B cell (primary cell): ENCODE measurements at regions of chr9 and their contacts with region 1.

Region 1: DNA sequence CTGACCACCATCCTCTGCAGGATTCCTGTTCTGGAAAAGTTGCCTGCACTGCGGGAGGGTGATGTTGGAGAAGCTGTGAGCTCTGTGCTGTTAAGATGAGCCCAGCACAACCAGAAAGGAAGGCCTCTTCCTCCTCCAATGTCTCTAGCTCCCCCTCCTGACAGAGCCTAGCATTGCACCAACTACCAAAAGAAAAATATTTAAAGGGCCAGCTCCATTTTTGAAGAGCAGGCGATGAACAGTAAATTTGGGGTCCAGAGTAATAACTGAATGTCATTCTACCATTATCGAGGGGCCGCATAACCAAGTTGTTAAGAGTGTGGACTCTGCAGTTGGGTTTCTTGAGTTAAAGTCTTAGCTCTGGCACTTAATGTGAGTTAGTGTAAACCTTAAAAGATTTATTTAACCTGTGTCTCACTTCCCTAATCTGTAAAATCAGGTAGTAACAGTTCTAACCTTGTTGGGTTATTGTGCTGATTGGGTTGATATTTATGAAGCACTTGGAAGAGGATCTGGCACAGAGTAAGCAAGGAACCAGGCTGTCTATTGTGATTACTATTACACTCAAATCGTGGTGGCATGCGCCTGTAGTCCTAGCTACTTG is 3.9 kb downstream of the TEX53 start:
- DNase-seq: peak; percentile 85
- ATAC-seq: peak; percentile 94
- H3K4me3 ChIP-seq: no peak overlapping the region
- H3K4me3 Mint-ChIP-seq: no peak overlapping the region
- H3K27ac ChIP-seq: peak overlapping the region in 1 of 2 donors; percentile 51
- H3K27ac Mint-ChIP-seq: no peak overlapping the region
- H3K4me1 ChIP-seq: peaks cover 22 to 24% of the 10 kb centered on the region in 2 donors
- H3K4me1 Mint-ChIP-seq: peaks cover 21% of the 10 kb centered on the region
- H3K27me3 ChIP-seq: no peaks in the 10 kb centered on the region
- H3K27me3 Mint-ChIP-seq: no peaks in the 10 kb centered on the region
- CTCF ChIP-seq: peak; percentile 96

Region 2: DNA sequence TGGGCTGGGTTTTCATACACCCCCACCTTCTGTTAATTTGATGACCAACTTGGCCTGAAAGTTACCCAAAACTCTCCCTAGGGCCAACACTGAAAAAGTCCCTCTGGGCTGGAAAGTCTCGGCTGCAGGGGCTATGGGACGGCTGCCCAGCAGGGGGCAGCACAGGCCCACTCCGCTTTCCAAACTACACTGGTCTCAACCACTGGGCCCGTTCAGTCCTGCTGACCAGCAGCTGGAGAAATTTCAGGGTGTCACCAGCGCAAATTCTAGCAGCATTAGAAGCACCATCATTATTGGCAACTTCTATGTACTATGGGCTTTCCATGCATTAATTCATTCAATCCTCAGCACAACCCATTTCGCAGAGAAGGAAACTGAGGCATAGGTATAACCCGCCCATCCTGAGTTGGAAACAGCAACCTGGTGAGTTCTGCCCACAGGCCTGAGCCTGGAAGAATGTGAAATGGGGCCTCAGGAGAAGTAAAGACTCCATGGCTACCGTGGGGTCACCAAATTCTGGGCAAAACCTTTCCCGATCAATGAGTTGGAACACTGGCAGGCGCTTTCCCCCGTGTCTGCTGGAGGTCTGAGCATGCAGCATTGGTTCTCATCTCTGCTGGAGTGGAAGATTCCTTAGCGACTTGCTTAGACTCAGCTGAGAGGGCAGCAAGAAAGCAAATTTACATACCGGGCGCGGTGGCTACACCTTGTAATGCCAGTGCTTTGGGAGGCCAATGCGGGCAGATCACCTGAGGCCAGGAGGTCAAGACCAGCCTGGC is 314.3 kb before region 1 on chr9:
- CTCF ChIA-PET with region 1: interaction called, 27 read pairs
- POLR2A ChIA-PET with region 1: no interaction called
- intact Hi-C with region 1: loop called (anchors 1 kb)
- DNase-seq: peak; percentile 74
- ATAC-seq: peak; percentile 68
- H3K4me3 ChIP-seq: no peak overlapping the region
- H3K4me3 Mint-ChIP-seq: no peak overlapping the region
- H3K27ac ChIP-seq: peak overlapping the region in 1 of 2 donors; percentile 71
- H3K27ac Mint-ChIP-seq: peak overlapping the region; percentile 80
- H3K4me1 ChIP-seq: peaks cover 0 to 17% of the 10 kb centered on the region in 2 donors
- H3K4me1 Mint-ChIP-seq: peaks cover 37% of the 10 kb centered on the region
- H3K27me3 ChIP-seq: no peaks in the 10 kb centered on the region
- H3K27me3 Mint-ChIP-seq: no peaks in the 10 kb centered on the region
- CTCF ChIP-seq: peak; percentile 91

Region 3: GRCh38 chr9:114397848-114398605 is 255.6 kb before region 1 on chr9:
- CTCF ChIA-PET with region 1: interaction called, 144 read pairs
- POLR2A ChIA-PET with region 1: interaction called, 13 read pairs
- intact Hi-C with region 1: no loop called
- DNase-seq: peak; percentile 98
- ATAC-seq: peak; percentile 76
- H3K4me3 ChIP-seq: peak overlapping the region; percentile 55 to 99 (median 93)
- H3K4me3 Mint-ChIP-seq: peak overlapping the region; percentile 93
- H3K27ac ChIP-seq: peak overlapping the region; percentile 99
- H3K27ac Mint-ChIP-seq: peak overlapping the region; percentile 94
- H3K4me1 ChIP-seq: peaks cover 42 to 54% of the 10 kb centered on the region in 2 donors
- H3K4me1 Mint-ChIP-seq: peaks cover 42% of the 10 kb centered on the region
- H3K27me3 ChIP-seq: no peaks in the 10 kb centered on the region
- H3K27me3 Mint-ChIP-seq: no peaks in the 10 kb centered on the region
- CTCF ChIP-seq: peak; percentile 14

Region 4: GRCh38 chr9:114452219-114453165 is 201.2 kb before region 1 on chr9:
- CTCF ChIA-PET with region 1: interaction called, 36 read pairs
- POLR2A ChIA-PET with region 1: no interaction called
- intact Hi-C with region 1: no loop called
- DNase-seq: peak; percentile 82
- ATAC-seq: peak; percentile 46
- H3K4me3 ChIP-seq: peak overlapping the region in 3 of 5 experiments; percentile 1 to 44 (median 6)
- H3K4me3 Mint-ChIP-seq: peak overlapping the region; percentile 80
- H3K27ac ChIP-seq: peak overlapping the region; percentile 87 to 92
- H3K27ac Mint-ChIP-seq: peak overlapping the region; percentile 97
- H3K4me1 ChIP-seq: peaks cover 57 to 58% of the 10 kb centered on the region in 2 donors
- H3K4me1 Mint-ChIP-seq: peaks cover 57% of the 10 kb centered on the region
- H3K27me3 ChIP-seq: no peaks in the 10 kb centered on the region
- H3K27me3 Mint-ChIP-seq: no peaks in the 10 kb centered on the region
- CTCF ChIP-seq: no peak

Region 5: GRCh38 chr9:114538241-114538640 is 115.4 kb before region 1 on chr9:
- CTCF ChIA-PET with region 1: interaction called, 89 read pairs
- POLR2A ChIA-PET with region 1: no interaction called
- intact Hi-C with region 1: loop called (anchors 1 kb)
- DNase-seq: peak; percentile 74
- ATAC-seq: peak; percentile 99
- H3K4me3 ChIP-seq: no peak overlapping the region
- H3K4me3 Mint-ChIP-seq: no peak overlapping the region
- H3K27ac ChIP-seq: peak overlapping the region in 1 of 2 donors; percentile 0
- H3K27ac Mint-ChIP-seq: peak overlapping the region; percentile 38
- H3K4me1 ChIP-seq: peaks cover 8 to 13% of the 10 kb centered on the region in 2 donors
- H3K4me1 Mint-ChIP-seq: peaks cover 27% of the 10 kb centered on the region
- H3K27me3 ChIP-seq: no peaks in the 10 kb centered on the region
- H3K27me3 Mint-ChIP-seq: no peaks in the 10 kb centered on the region
- CTCF ChIP-seq: peak; percentile 68

Region 6: GRCh38 chr9:114616653-114617520 is 36.8 kb before region 1 on chr9:
- CTCF ChIA-PET with region 1: interaction called, 20 read pairs
- POLR2A ChIA-PET with region 1: interaction called, 4 read pairs
- intact Hi-C with region 1: loop called (anchors 2 kb)
- DNase-seq: peak; percentile 88
- ATAC-seq: peak; percentile 80
- H3K4me3 ChIP-seq: peak overlapping the region in 1 of 5 experiments; percentile 18
- H3K4me3 Mint-ChIP-seq: peak overlapping the region; percentile 79
- H3K27ac ChIP-seq: peak overlapping the region; percentile 81 to 89
- H3K27ac Mint-ChIP-seq: peak overlapping the region; percentile 98
- H3K4me1 ChIP-seq: peaks cover 74 to 94% of the 10 kb centered on the region in 2 donors
- H3K4me1 Mint-ChIP-seq: peaks cover 72% of the 10 kb centered on the region
- H3K27me3 ChIP-seq: no peaks in the 10 kb centered on the region
- H3K27me3 Mint-ChIP-seq: no peaks in the 10 kb centered on the region
- CTCF ChIP-seq: no peak

Region 7: DNA sequence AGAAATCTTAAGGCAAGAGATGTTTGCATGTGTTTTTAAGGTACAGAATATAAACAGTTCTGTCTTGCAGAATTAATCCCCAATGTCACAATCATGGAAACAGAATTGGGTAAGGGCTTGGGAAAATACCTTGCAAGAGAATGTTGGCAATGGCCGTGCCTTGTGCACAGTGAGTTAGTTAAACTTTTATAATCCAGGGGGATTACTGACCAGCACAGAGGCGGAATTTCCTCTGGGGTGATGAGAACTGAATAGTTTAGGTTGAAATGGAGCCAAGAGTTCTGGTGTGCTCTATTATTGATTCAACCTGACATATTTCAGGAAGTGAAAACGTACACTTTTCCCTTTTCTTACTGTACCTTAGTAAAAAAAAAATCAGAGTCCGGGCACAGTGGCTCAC is 132.6 kb after region 1 on chr9:
- CTCF ChIA-PET with region 1: no interaction called
- POLR2A ChIA-PET with region 1: no interaction called
- intact Hi-C with region 1: no loop called
- DNase-seq: no peak
- ATAC-seq: no peak
- H3K4me3 ChIP-seq: no peak overlapping the region
- H3K4me3 Mint-ChIP-seq: peak overlapping the region; percentile 87
- H3K27ac ChIP-seq: no peak overlapping the region
- H3K27ac Mint-ChIP-seq: no peak overlapping the region
- H3K4me1 ChIP-seq: peaks cover 30 to 39% of the 10 kb centered on the region in 2 donors
- H3K4me1 Mint-ChIP-seq: peaks cover 45% of the 10 kb centered on the region
- H3K27me3 ChIP-seq: peaks cover 0 to 4% (median 0%) of the 10 kb centered on the region in 4 experiments
- H3K27me3 Mint-ChIP-seq: peaks cover 9% of the 10 kb centered on the region
- CTCF ChIP-seq: no peak